ENCODE measurements at regions of chr16 and their contacts with region 1.

Region 1: GRCh38 chr16:71961066-71962039 is 38.8 kb downstream of the PKD1L3 start:
- DNase-seq: peak; percentile 84 to 90 (median 89)
- ATAC-seq: peak; percentile 86 to 96
- H3K4me3 ChIP-seq: no peak overlapping the region
- H3K27ac ChIP-seq: no peak overlapping the region
- H3K4me1 ChIP-seq: no peaks in the 10 kb centered on the region
- H3K27me3 ChIP-seq: no peaks in the 10 kb centered on the region

Region 2: GRCh38 chr16:71746442-71747046 is 214.8 kb before region 1 on chr16:
- intact Hi-C with region 1: loop called in 1 of 4 experiments (anchors 5 kb)
- DNase-seq: no peak
- ATAC-seq: no peak
- H3K4me3 ChIP-seq: no peak overlapping the region
- H3K27ac ChIP-seq: no peak overlapping the region
- H3K4me1 ChIP-seq: no peaks in the 10 kb centered on the region
- H3K27me3 ChIP-seq: no peaks in the 10 kb centered on the region

Region 3: DNA sequence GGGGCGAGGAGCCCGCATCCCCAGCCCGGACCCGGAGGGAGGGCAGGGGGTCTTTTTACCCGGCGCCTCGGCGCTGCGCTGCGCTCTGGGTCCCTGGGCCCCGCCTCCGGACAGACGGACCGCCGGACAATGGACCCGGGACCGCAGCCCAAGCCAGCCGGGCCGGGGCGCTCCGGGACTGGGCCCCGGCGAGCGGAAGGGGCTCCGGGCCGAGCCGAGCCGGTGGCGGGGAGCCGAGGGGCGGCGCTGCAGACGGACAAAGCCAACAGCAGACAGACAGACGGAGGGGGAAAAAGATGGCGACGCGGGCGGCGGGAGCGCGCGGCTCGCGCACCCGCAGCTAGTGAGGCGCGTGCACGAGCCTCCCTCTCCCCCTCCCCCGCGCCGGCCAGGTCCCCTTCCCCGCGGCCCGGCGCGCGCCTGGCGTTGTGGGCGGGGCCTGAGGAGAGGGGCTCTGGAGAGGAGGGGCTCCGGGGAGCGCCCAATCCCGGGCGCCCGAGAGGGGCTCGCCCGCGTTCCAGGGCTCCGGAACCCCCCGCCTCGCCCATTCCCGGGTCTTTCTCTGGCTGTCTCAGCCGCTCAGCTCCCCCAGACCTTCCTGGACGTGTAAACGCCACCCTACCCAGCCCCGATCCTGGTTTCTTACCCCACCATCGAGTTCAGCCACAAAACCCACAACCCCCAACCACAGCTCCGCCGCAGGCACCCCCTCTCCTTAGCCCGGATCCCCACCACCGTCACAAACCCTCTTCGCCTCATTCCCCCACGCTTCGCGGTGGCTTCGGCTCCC is 77.3 kb before region 1 on chr16 and contains the start of gene ZNF821:
- intact Hi-C with region 1: loop called in 1 of 4 experiments (anchors 10 kb)
- DNase-seq: peak; percentile 83 to 93 (median 93)
- ATAC-seq: peak; percentile 94 to 96
- H3K4me3 ChIP-seq: peak within 1 kb of the TSS; percentile 70
- H3K27ac ChIP-seq: peak within 1 kb of the TSS; percentile 89
- H3K4me1 ChIP-seq: no peaks in the 10 kb centered on the region
- H3K27me3 ChIP-seq: no peaks in the 10 kb centered on the region
- total RNA-seq, gene ZNF821: 6.3 to 8.5 (median 6.9) TPM

Region 4: GRCh38 chr16:71912534-71913253 is 48.7 kb before region 1 on chr16:
- intact Hi-C with region 1: no loop called
- DNase-seq: no peak
- ATAC-seq: no peak
- H3K4me3 ChIP-seq: no peak overlapping the region
- H3K27ac ChIP-seq: no peak overlapping the region
- H3K4me1 ChIP-seq: peaks cover 22% of the 10 kb centered on the region
- H3K27me3 ChIP-seq: no peaks in the 10 kb centered on the region

Region 5: GRCh38 chr16:72066747-72067146 is 105.4 kb after region 1 on chr16:
- intact Hi-C with region 1: no loop called
- DNase-seq: no peak
- ATAC-seq: peak; percentile 48 to 53
- H3K4me3 ChIP-seq: no peak overlapping the region
- H3K27ac ChIP-seq: no peak overlapping the region
- H3K4me1 ChIP-seq: peaks cover 5% of the 10 kb centered on the region
- H3K27me3 ChIP-seq: no peaks in the 10 kb centered on the region

Measured in right cardiac atrium (tissue), 5 donors.